ENCODE measurements at regions of chr10 and their contacts with region 1.

Region 1: GRCh38 chr10:62610649-62611229 is 193.8 kb upstream of the ADO start:
- DNase-seq: peak; percentile 56

Region 2: DNA sequence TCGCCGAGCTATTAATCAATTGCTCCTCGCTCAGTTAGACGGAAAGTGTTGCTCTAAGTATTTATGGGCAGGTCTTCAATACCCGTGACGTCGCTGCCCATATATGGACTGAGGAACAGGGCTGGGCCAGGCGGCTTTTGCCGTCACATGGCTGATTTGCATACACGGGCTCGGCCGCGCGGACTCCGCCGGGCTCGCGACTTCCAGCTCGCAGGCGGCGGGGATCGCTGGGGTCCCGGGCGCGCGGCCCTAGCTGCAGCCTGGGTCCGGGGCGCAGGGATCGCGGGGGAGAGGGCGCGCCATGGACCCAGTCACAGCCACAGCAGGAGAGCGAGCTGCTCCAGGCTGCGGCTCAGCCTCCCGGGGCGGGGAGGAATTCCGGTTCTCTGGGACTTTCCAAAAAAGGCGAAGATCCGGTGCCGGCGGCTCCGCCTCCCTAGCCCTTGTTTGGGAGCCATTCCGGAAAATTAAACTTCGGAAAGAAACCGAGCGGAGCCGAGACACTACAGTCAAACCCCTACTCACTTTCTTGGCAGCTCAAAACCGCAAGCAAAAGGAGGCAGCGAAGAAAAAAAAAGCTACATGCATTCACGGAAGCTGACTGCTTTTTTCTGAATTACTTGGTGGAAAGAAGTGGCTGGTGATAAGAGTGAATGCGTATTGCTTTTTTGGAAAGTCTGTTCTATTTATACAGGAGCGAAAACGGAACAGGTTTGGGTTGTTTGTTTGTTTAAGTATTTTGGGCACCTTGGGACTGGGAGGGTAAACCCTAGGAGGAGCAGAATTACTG is 205.8 kb after region 1 on chr10 and contains the start of gene EGR2:
- in situ Hi-C with region 1: loop called (anchors 25 kb)
- DNase-seq: peak; percentile 94

Region 3: DNA sequence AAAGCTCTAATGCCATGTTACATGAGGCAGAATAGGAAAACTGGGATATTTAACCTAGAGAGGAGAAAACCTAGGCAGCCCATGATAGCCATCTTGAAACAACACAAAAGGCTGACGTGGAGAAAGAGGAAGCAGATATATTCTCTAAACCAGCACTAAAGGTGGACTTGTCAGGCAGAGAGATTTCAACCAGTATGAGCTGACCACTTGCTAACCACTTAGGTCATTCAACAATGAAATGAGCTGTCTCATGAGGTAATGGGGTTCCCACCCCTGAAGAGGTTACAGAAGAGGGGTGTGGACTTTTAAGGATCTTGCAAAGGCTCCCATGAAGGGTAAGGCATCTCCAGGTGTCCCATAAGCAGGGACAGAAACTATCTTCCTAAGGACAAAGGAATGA is 232.2 kb after region 1 on chr10:
- in situ Hi-C with region 1: no loop called
- DNase-seq: no peak